ENCODE measurements at regions of chr7 and their contacts with region 1.

Region 1: DNA sequence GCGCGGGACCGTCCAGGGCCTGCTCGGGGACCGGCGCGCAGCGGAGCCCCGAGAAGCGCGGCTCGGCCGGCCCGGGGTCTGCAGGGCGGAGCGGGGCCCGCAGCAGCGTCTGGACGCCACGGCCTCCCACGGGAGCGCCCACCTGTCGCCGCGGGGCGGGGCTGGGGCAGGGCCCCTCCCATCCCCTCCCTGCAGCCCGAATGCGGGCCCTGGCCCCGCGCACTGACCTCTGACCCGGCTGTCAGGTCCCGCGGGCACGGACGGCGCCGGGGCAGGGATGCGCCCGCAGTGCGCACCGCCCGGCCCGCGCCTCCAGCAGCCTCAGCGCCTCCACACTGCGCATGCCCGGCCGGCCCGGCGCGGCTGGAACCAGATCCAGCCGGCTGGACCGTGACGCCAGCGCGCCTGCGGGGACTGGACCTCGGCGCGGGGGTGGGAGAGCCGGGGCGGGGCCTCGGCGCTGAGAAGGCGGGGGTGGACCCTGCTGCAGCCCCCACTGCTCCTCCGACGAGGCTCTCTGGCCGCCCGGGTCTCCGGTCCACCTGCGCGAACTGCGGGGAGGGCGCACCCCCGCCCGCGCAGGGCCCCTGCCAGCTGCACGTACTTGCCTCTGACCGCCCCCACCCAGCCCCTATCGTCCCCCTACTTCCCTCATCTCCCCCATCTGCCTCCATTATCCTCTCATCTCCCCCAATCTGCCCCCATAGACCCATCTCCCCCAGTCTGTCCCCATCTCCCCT is 16.1 kb upstream of the GPR146 start:
- DNase-seq: peak; percentile 89
- H3K4me3 ChIP-seq: peak overlapping the region; percentile 85
- H3K27ac ChIP-seq: peak overlapping the region; percentile 95
- H3K4me1 ChIP-seq: peaks cover 69% of the 10 kb centered on the region
- CTCF ChIP-seq: no peak

Region 2: GRCh38 chr7:974820-975681 is 53.1 kb before region 1 on chr7 and contains the start of gene COX19:
- CTCF ChIA-PET with region 1: no interaction called
- POLR2A ChIA-PET with region 1: interaction called, 3 read pairs
- intact Hi-C with region 1: loop called (anchors 1 kb)
- DNase-seq: peak; percentile 94
- H3K4me3 ChIP-seq: peak within 1 kb of the TSS; percentile 100
- H3K27ac ChIP-seq: peak within 1 kb of the TSS; percentile 73
- H3K4me1 ChIP-seq: peaks cover 74% of the 10 kb centered on the region
- CTCF ChIP-seq: no peak
- total RNA-seq, gene COX19: 20.3 and 23.2 TPM in 2 replicates

Region 3: DNA sequence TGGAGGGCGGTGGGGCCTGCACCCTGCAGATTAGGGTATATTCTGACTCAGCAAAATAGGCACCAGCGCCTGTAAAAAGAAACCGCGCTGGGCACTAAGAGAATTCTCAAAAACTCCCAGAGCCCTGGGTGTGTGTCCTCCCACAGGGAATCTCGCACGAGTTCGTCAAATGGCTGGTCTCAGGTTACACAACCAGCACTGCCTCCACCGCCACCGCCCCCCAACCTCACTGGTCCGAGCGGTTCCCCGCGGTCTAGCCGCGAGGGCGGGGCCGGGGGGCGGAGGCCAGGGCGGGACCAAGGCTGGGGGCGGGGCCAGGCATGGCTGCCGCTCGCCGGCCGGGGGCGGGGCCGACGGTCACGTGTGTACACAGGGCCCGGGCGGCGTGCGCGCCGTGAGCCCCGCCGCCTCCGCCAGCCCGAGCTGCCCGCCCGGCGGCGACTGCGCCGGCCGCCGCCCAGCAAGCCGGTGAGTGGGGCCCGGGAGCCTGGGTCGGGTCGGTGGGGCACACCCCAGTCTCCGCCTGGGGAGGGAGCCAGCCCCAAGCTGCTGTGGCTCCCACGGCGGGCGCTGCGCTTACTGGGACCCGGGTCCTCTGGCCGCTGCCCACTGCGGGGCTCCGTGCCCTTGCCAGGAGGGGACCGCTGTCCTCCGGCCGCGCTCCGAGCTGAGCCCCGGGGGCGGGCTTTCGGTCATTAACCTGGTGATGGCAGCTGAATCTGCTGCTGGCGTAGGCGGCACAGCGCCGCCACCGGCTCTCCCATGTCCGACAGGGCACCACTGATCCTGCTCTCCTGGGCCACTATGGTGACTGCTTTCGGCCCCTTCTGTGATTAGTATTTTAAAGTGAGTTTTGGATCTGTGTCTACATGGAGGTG is 16.2 kb after region 1 on chr7 and contains the start of gene GPR146:
- CTCF ChIA-PET with region 1: interaction called, 3 read pairs
- POLR2A ChIA-PET with region 1: interaction called, 6 read pairs
- intact Hi-C with region 1: loop called (anchors 2 kb)
- DNase-seq: peak; percentile 93
- H3K4me3 ChIP-seq: peak within 1 kb of the TSS; percentile 70
- H3K27ac ChIP-seq: peak within 1 kb of the TSS; percentile 49
- H3K4me1 ChIP-seq: peaks cover 15% of the 10 kb centered on the region
- CTCF ChIP-seq: peak; percentile 80
- total RNA-seq, gene GPR146: 0.62 and 0.95 TPM in 2 replicates

Region 4: DNA sequence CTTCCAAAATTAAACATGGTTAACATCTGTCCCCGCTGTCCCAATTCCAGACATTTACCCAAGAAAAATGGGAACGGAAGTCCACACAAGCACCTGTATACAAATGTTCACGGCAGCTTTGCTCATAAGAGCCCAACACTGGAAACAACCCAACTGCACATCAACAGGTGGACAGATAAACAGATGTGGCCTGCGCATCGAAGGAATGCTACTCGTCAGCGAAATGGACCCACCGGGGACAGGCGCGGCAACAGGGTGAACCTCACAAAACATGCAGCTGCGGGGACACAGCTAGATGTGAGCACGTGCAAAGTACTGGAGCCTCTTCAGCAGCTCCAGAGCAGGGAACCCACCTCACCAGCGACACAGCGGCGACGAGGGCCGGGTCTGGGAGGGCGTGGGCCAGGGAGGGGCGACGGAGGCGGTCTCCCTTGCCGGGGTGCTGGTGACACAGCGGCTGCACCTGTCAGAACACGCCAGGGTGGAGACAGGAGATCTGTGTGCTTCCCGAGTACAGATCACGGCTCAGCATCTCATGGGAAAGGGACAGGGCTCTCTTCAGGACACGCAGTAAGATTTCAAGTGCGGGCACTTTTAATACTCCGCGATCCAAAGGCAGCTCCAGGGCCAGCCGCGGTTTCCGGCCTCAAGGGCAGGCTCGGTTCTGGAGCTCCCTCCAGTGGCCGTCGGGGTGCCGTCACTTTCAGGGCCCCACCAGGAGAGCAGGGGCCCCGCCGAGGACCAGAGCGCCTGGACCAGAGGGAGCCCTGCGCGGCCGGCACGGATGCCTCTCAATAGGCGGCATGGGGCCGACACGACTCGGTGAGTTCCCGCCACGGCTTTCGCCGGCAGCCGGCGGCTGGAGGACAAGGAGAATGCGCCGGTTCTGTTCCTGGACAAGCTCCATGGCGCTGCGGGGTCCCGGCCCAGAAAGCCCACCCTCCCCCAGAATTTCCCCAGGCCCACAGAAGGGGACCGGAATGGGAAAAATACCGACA is 37.4 kb after region 1 on chr7:
- CTCF ChIA-PET with region 1: interaction called, 3 read pairs
- POLR2A ChIA-PET with region 1: interaction called, 3 read pairs
- intact Hi-C with region 1: loop called (anchors 1 kb)
- DNase-seq: peak; percentile 80
- H3K4me3 ChIP-seq: peak overlapping the region; percentile 38
- H3K27ac ChIP-seq: no peak overlapping the region
- H3K4me1 ChIP-seq: peaks cover 51% of the 10 kb centered on the region
- CTCF ChIP-seq: peak; percentile 88

Region 5: GRCh38 chr7:1503816-1504775 is 475.9 kb after region 1 on chr7 and contains the start of gene INTS1:
- CTCF ChIA-PET with region 1: no interaction called
- POLR2A ChIA-PET with region 1: no interaction called
- intact Hi-C with region 1: loop called (anchors 5 kb)
- DNase-seq: peak; percentile 94
- H3K4me3 ChIP-seq: peak within 1 kb of the TSS; percentile 100
- H3K27ac ChIP-seq: peak within 1 kb of the TSS; percentile 90
- H3K4me1 ChIP-seq: peaks cover 48% of the 10 kb centered on the region
- CTCF ChIP-seq: peak; percentile 84
- total RNA-seq, gene INTS1: 61.5 and 83.6 TPM in 2 replicates

Measured in OCI-LY7 (cell line).